ENCODE measurements at regions of chr6 and their contacts with region 1.

Region 1: DNA sequence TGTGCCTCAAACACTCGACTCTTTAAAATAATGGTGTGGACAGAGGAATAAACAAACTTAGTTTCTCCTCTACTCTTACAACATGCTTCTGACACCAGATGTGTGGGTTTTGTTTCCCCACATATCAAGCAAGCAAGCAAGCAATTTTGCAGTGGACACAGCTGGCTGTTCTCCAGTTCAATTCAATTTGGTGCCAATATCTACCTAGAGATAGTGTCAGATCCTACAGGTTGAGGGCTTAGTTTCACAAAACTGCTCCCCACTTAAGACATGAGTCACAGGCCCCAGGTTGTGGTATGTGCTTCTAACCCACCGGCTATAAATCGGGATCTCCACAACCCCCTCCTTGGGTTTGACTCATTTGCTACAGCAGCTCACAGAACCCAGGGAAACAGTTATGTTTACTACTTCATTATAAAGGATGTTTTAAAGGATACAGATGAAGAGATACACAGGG is 131.4 kb upstream of the TRAF3IP2 start:
- DNase-seq: peak in 5 of 9 experiments; percentile 51 to 66 (median 56)
- ATAC-seq: peak; percentile 74
- H3K4me3 ChIP-seq: no peak overlapping the region
- H3K4me3 Mint-ChIP-seq: peak overlapping the region; percentile 19
- H3K27ac ChIP-seq: peak overlapping the region in 1 of 2 experiments; percentile 65
- H3K27ac Mint-ChIP-seq: peak overlapping the region; percentile 87
- H3K4me1 ChIP-seq: peaks cover 83% of the 10 kb centered on the region
- H3K4me1 Mint-ChIP-seq: peaks cover 94% of the 10 kb centered on the region
- H3K27me3 ChIP-seq: no peaks in the 10 kb centered on the region
- H3K27me3 Mint-ChIP-seq: no peaks in the 10 kb centered on the region
- CTCF ChIP-seq: no peak

Region 2: DNA sequence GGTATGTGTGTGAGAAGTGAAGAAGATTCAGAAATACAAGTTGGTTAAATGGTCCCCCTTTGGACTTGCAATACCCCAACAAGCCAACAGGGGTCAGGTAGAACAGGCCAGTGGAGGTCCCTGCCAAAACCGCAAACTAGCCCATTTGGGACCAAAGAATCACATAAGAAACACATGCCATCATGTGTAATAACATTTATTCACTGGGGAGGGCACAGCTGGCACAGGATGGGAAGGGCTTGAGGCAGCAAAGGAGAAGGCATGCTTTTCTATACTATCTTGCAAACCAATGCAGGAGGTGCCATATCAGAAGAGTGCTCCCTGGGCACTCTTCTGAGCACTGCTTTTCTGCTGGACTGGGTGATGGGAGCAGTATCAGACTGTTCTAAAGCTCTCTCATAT is 15.3 kb before region 1 on chr6:
- CTCF ChIA-PET with region 1: interaction called, 4 read pairs
- POLR2A ChIA-PET with region 1: interaction called, 6 read pairs
- intact Hi-C with region 1: loop called (anchors 1 to 2 kb)
- DNase-seq: peak in 7 of 9 experiments; percentile 21 to 74 (median 58)
- ATAC-seq: peak; percentile 39
- H3K4me3 ChIP-seq: no peak overlapping the region
- H3K4me3 Mint-ChIP-seq: no peak overlapping the region
- H3K27ac ChIP-seq: peak overlapping the region in 1 of 2 experiments; percentile 72
- H3K27ac Mint-ChIP-seq: peak overlapping the region; percentile 83
- H3K4me1 ChIP-seq: peaks cover 46% of the 10 kb centered on the region
- H3K4me1 Mint-ChIP-seq: peaks cover 86% of the 10 kb centered on the region
- H3K27me3 ChIP-seq: no peaks in the 10 kb centered on the region
- H3K27me3 Mint-ChIP-seq: no peaks in the 10 kb centered on the region
- CTCF ChIP-seq: peak; percentile 66

Region 3: DNA sequence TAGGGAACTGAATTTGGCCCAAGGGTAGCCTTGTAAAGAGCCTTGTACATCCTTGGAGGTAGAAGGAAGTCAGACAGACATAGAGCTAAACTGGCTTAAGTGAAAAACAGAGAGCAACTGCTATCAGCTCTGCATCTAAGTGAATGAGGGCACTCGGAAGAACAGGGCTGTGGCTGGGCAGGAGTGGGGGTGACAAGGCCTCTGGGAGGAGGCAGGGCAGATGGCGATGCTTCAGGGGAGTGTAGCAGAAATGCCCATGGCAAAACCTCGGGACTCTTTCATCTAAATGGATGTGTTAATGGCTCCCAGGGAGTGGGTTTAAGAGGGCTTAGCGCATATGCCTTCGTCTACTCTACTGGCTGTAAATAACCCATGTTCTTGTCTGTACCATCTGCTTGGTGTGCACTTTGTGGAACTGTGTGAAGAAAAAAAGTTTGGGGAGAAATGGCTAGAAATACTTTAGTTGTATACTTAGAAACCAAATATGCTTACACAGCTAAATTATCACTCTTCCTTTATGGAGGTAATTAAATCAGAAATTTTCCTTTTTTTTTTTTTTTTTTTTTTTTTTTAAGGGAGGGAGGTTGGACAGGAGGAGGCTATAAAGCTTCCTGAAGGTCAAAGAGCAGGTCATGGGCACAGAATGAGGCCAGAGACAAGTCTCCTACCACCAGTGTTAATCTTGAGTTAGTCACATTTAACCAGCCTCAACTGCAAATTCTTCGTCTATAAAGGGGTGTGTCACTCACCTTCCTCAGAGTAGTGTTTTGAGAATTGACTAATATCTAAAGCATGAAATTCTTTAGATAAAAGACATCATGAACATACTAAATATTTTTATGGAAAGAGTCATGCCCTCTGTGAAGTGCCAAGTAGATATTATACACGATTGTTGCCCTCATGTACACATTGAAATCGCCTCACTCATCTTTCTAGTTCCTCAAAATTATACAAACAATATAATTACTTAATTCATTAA is 75.3 kb after region 1 on chr6:
- CTCF ChIA-PET with region 1: no interaction called
- POLR2A ChIA-PET with region 1: no interaction called
- intact Hi-C with region 1: no loop called
- DNase-seq: no peak
- ATAC-seq: no peak
- H3K4me3 ChIP-seq: no peak overlapping the region
- H3K4me3 Mint-ChIP-seq: peak overlapping the region; percentile 24
- H3K27ac ChIP-seq: peak overlapping the region in 1 of 2 experiments; percentile 19
- H3K27ac Mint-ChIP-seq: peak overlapping the region; percentile 92
- H3K4me1 ChIP-seq: peaks cover 75% of the 10 kb centered on the region
- H3K4me1 Mint-ChIP-seq: peaks cover 82% of the 10 kb centered on the region
- H3K27me3 ChIP-seq: no peaks in the 10 kb centered on the region
- H3K27me3 Mint-ChIP-seq: no peaks in the 10 kb centered on the region
- CTCF ChIP-seq: no peak

Measured in CD8-positive, alpha-beta T cell (primary cell).